ENCODE measurements at regions of chr15 and their contacts with region 1.

Region 1: GRCh38 chr15:99565299-99566156 is at the start of gene MEF2A:
- DNase-seq: peak; percentile 98
- ATAC-seq: peak; percentile 71
- H3K4me3 ChIP-seq: peak within 1 kb of the TSS; percentile 75 to 96 (median 91)
- H3K4me3 Mint-ChIP-seq: peak within 1 kb of the TSS; percentile 100
- H3K27ac ChIP-seq: peak within 1 kb of the TSS; percentile 98 to 99
- H3K27ac Mint-ChIP-seq: peak within 1 kb of the TSS; percentile 99
- H3K4me1 ChIP-seq: peaks cover 33 to 37% of the 10 kb centered on the region in 2 donors
- H3K4me1 Mint-ChIP-seq: peaks cover 48% of the 10 kb centered on the region
- H3K27me3 ChIP-seq: no peaks in the 10 kb centered on the region
- H3K27me3 Mint-ChIP-seq: no peaks in the 10 kb centered on the region
- CTCF ChIP-seq: no peak
- total RNA-seq, gene MEF2A: 102 and 104 TPM in 2 replicates

Region 2: DNA sequence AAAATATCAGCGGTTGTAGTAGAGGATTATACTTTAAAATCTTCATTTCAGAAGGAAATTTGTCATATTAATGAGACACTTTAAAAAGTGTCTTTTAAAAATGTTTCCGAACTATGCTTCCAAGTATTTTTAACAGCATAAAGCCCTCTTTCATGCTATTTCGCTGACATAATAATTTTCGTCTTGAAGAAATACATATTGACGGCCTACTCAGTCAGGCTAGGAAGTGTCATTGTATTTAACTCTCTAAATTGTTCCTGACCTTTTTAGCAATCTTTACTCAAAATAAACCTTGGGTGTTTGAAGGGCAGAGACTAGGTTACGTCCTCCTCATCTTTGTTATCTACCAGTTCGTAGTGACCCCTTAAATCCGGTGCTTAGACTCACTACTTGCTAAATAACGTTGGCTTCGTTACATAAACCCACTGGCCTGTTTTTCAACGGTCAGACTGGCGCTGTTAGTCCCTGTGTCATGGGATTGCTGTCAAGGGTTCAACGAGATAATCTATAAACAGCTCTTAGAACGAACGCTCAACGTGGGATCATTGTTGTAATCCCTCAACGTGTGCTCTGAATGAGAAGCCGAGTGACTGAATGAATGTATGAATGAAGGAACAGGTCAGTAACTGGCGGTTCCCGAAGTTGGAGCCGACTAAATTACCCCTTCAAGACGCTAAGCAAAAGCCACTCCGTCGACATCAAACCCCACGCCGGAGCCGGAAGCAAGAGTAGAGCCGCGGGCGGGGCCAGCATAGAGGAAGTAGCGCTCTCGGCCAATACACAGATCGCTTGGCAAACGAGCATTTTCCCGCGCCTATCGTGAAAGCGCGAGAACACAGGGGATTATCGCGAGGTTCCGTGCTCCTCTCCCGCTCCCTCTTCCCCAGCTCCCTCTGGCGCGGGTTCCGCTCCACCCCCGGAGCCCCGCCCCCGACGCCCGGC is 314.8 kb before region 1 on chr15:
- CTCF ChIA-PET with region 1: no interaction called
- POLR2A ChIA-PET with region 1: no interaction called
- intact Hi-C with region 1: loop called (anchors 5 kb)
- DNase-seq: peak; percentile 97
- ATAC-seq: peak; percentile 97
- H3K4me3 ChIP-seq: peak overlapping the region; percentile 61 to 91 (median 81)
- H3K4me3 Mint-ChIP-seq: peak overlapping the region; percentile 96
- H3K27ac ChIP-seq: peak overlapping the region; percentile 70 to 81
- H3K27ac Mint-ChIP-seq: peak overlapping the region; percentile 92
- H3K4me1 ChIP-seq: peaks cover 18 to 30% of the 10 kb centered on the region in 2 donors
- H3K4me1 Mint-ChIP-seq: peaks cover 31% of the 10 kb centered on the region
- H3K27me3 ChIP-seq: no peaks in the 10 kb centered on the region
- H3K27me3 Mint-ChIP-seq: no peaks in the 10 kb centered on the region
- CTCF ChIP-seq: no peak

Region 3: GRCh38 chr15:99282121-99282520 is 283.4 kb before region 1 on chr15:
- CTCF ChIA-PET with region 1: interaction called, 19 read pairs
- POLR2A ChIA-PET with region 1: no interaction called
- intact Hi-C with region 1: no loop called
- DNase-seq: no peak
- ATAC-seq: no peak
- H3K4me3 ChIP-seq: no peak overlapping the region
- H3K4me3 Mint-ChIP-seq: no peak overlapping the region
- H3K27ac ChIP-seq: no peak overlapping the region
- H3K27ac Mint-ChIP-seq: no peak overlapping the region
- H3K4me1 ChIP-seq: no peaks in the 10 kb centered on the region
- H3K4me1 Mint-ChIP-seq: peaks cover 9% of the 10 kb centered on the region
- H3K27me3 ChIP-seq: no peaks in the 10 kb centered on the region
- H3K27me3 Mint-ChIP-seq: no peaks in the 10 kb centered on the region
- CTCF ChIP-seq: no peak

Region 4: DNA sequence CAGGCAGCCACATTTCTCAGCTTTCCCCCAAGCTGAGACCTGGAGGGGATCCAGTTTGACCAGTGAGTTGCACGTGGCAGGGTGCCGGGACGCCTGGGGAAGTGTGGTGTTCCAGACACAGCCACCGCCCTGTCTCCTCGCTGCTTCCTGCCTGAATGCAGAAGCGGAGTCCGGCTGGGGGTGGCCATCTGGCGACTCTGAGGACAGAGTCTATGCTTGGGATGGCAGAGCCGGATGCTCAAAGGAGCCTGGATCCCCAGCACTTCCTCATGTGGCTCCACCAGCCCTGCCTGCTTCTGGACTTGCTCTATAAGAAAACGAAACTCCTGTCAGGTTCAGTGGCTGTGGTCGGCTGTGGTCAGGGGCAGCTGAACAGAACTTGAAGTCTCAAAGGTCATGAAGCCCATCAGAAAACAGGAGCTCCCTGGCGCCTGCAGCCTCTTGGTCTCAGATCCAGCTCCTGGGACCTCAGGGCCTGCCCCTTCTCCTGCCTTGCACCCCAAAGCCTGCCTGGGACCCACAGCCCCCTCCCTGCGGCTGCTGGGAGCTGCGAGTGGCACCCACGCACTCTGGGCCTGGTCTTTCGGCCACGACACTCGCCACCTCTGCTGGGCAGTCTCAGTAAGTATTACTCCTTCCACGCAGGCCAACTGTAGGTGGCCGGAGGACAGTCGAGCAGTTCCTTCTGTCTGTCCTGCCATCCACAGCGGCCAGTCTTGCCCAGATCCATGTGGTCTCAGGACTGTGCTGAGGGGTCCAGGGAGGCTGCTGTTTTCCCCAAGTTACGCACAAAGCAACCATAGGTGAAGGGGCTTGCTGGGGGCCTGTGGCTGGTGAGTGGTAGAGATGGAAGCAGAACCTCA is 112.5 kb before region 1 on chr15:
- CTCF ChIA-PET with region 1: no interaction called
- POLR2A ChIA-PET with region 1: interaction called, 8 read pairs
- intact Hi-C with region 1: loop called (anchors 5 kb)
- DNase-seq: peak; percentile 57
- ATAC-seq: peak; percentile 80
- H3K4me3 ChIP-seq: peak overlapping the region in 4 of 5 experiments; percentile 24 to 49 (median 44)
- H3K4me3 Mint-ChIP-seq: peak overlapping the region; percentile 75
- H3K27ac ChIP-seq: peak overlapping the region in 1 of 2 donors; percentile 13
- H3K27ac Mint-ChIP-seq: peak overlapping the region; percentile 50
- H3K4me1 ChIP-seq: peaks cover 31 to 44% of the 10 kb centered on the region in 2 donors
- H3K4me1 Mint-ChIP-seq: peaks cover 46% of the 10 kb centered on the region
- H3K27me3 ChIP-seq: no peaks in the 10 kb centered on the region
- H3K27me3 Mint-ChIP-seq: no peaks in the 10 kb centered on the region
- CTCF ChIP-seq: no peak

Region 5: GRCh38 chr15:99502182-99502581 is 63.3 kb before region 1 on chr15:
- CTCF ChIA-PET with region 1: interaction called, 5 read pairs
- POLR2A ChIA-PET with region 1: interaction called, 43 read pairs
- intact Hi-C with region 1: loop called (anchors 2 kb)
- DNase-seq: peak; percentile 81
- ATAC-seq: peak; percentile 81
- H3K4me3 ChIP-seq: no peak overlapping the region
- H3K4me3 Mint-ChIP-seq: peak overlapping the region; percentile 59
- H3K27ac ChIP-seq: peak overlapping the region; percentile 60 to 71
- H3K27ac Mint-ChIP-seq: peak overlapping the region; percentile 94
- H3K4me1 ChIP-seq: peaks cover 56 to 70% of the 10 kb centered on the region in 2 donors
- H3K4me1 Mint-ChIP-seq: peaks cover 64% of the 10 kb centered on the region
- H3K27me3 ChIP-seq: no peaks in the 10 kb centered on the region
- H3K27me3 Mint-ChIP-seq: no peaks in the 10 kb centered on the region
- CTCF ChIP-seq: no peak

Region 6: DNA sequence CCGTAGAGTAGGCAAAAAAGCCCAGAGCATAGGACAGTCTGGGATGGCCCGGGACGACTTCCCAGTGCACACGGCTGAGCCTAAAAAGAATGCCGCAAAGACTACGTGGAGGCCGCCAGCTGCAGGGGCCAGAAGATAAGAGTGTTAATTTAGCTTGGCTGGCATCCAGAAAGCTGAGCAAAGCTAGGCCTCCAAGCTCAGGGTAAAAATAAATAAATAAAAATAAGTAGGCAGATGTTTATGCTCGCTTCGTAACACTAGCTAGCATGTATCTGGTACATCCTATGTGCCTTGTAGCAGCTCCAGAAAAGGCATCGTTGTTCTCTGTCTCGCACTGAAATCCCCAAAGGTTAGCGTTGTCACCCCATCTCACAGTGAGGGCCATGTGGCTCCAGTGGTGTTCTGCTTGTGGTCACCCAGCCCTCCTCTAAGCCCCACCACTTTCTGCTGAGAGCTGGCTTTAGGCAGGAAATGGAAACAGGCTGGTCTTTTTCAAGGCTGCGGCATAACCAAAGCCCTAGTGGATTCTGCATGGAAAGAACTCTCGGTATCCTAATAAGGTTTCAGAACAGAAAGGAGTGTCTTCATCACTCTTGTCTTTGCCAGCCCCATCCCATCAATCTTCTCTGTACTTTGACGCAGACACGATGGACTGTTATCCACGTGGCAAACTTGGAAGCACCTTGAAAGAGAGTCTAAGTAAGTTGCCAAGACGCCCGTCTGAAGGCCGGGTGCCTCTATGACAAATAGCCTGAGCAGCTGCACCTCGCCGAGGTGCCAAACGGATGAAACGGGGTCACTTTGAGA is 57.8 kb before region 1 on chr15:
- CTCF ChIA-PET with region 1: interaction called, 38 read pairs
- POLR2A ChIA-PET with region 1: interaction called, 64 read pairs
- intact Hi-C with region 1: loop called (anchors 1 kb)
- DNase-seq: peak; percentile 47
- ATAC-seq: no peak
- H3K4me3 ChIP-seq: peak overlapping the region in 1 of 5 experiments; percentile 5
- H3K4me3 Mint-ChIP-seq: peak overlapping the region; percentile 79
- H3K27ac ChIP-seq: peak overlapping the region; percentile 50 to 90
- H3K27ac Mint-ChIP-seq: peak overlapping the region; percentile 86
- H3K4me1 ChIP-seq: peaks cover 87 to 88% of the 10 kb centered on the region in 2 donors
- H3K4me1 Mint-ChIP-seq: peaks cover 91% of the 10 kb centered on the region
- H3K27me3 ChIP-seq: no peaks in the 10 kb centered on the region
- H3K27me3 Mint-ChIP-seq: no peaks in the 10 kb centered on the region
- CTCF ChIP-seq: no peak

Region 7: GRCh38 chr15:99605490-99605931 is 40.0 kb after region 1 on chr15:
- CTCF ChIA-PET with region 1: no interaction called
- POLR2A ChIA-PET with region 1: no interaction called
- intact Hi-C with region 1: no loop called
- DNase-seq: no peak
- ATAC-seq: no peak
- H3K4me3 ChIP-seq: no peak overlapping the region
- H3K4me3 Mint-ChIP-seq: peak overlapping the region; percentile 51
- H3K27ac ChIP-seq: peak overlapping the region in 1 of 2 donors; percentile 44
- H3K27ac Mint-ChIP-seq: peak overlapping the region; percentile 73
- H3K4me1 ChIP-seq: peaks cover 17 to 45% of the 10 kb centered on the region in 2 donors
- H3K4me1 Mint-ChIP-seq: peaks cover 73% of the 10 kb centered on the region
- H3K27me3 ChIP-seq: no peaks in the 10 kb centered on the region
- H3K27me3 Mint-ChIP-seq: no peaks in the 10 kb centered on the region
- CTCF ChIP-seq: no peak

Region 8: GRCh38 chr15:99631255-99631654 is 65.7 kb after region 1 on chr15:
- CTCF ChIA-PET with region 1: interaction called, 3 read pairs
- POLR2A ChIA-PET with region 1: interaction called, 4 read pairs
- intact Hi-C with region 1: loop called (anchors 2 kb)
- DNase-seq: peak; percentile 83
- ATAC-seq: peak; percentile 96
- H3K4me3 ChIP-seq: peak overlapping the region in 3 of 5 experiments; percentile 6 to 32 (median 7)
- H3K4me3 Mint-ChIP-seq: peak overlapping the region; percentile 80
- H3K27ac ChIP-seq: peak overlapping the region; percentile 78 to 91
- H3K27ac Mint-ChIP-seq: peak overlapping the region; percentile 90
- H3K4me1 ChIP-seq: peaks cover 33 to 36% of the 10 kb centered on the region in 2 donors
- H3K4me1 Mint-ChIP-seq: peaks cover 63% of the 10 kb centered on the region
- H3K27me3 ChIP-seq: no peaks in the 10 kb centered on the region
- H3K27me3 Mint-ChIP-seq: no peaks in the 10 kb centered on the region
- CTCF ChIP-seq: no peak

Region 9: GRCh38 chr15:99719096-99719541 is 153.6 kb after region 1 on chr15:
- CTCF ChIA-PET with region 1: no interaction called
- POLR2A ChIA-PET with region 1: no interaction called
- intact Hi-C with region 1: no loop called
- DNase-seq: no peak
- ATAC-seq: no peak
- H3K4me3 ChIP-seq: no peak overlapping the region
- H3K4me3 Mint-ChIP-seq: peak overlapping the region; percentile 35
- H3K27ac ChIP-seq: no peak overlapping the region
- H3K27ac Mint-ChIP-seq: no peak overlapping the region
- H3K4me1 ChIP-seq: peaks cover 22 to 27% of the 10 kb centered on the region in 2 donors
- H3K4me1 Mint-ChIP-seq: peaks cover 41% of the 10 kb centered on the region
- H3K27me3 ChIP-seq: no peaks in the 10 kb centered on the region
- H3K27me3 Mint-ChIP-seq: no peaks in the 10 kb centered on the region
- CTCF ChIP-seq: no peak

Measured in B cell (primary cell).